Activated CD8-positive, alpha-beta memory T cell treated with anti-CD3 and anti-CD28 coated beads, Interleukin-2, amount 10 ng/mL, durations not matched to agents 7 days and 5 days (primary cell): ENCODE measurements at regions of chr22 and their contacts with region 1.

Region 1: DNA sequence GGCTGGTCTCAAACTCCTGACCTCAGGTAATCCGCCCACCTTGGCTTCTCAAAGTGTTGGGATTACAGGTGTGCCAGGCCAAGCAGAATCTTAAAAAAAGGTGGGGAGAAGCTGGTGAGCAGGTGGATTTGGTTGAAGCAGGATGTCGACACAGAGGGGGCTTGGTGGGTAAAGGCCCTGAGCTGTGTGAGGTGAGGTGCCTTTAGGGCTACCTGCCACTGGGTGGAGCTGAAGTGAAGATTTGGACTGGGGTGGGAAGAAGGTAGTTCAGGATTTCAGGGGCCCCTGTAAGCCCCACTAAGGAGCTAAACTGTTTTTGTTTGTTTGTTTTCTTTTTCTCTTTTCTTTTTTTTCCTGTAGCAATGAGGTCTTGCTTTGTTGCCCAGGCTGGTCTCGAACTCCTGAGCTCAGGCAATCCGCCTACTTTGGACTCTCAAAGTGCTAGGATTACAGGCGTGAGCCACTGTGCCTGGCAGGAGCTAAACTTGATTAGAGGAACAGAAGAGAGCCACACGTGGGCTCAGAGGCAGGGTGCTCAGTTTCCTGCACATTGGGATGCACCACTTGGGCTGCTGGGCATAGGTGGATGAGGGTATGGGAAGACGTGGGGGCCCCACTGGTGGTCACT is 6.0 kb downstream of the P2RX6 start:
- DNase-seq: peak; percentile 58
- ATAC-seq: peak; percentile 51
- H3K4me3 Mint-ChIP-seq: no peak overlapping the region
- H3K27ac Mint-ChIP-seq: no peak overlapping the region
- H3K4me1 Mint-ChIP-seq: peaks cover 15% of the 10 kb centered on the region
- H3K27me3 Mint-ChIP-seq: peaks cover 6% of the 10 kb centered on the region

Region 2: GRCh38 chr22:20441631-20442484 is 579.1 kb before region 1 on chr22:
- CTCF ChIA-PET with region 1: no interaction called
- DNase-seq: no peak
- ATAC-seq: no peak
- H3K4me3 Mint-ChIP-seq: no peak overlapping the region
- H3K27ac Mint-ChIP-seq: no peak overlapping the region
- H3K4me1 Mint-ChIP-seq: peaks cover 4% of the 10 kb centered on the region
- H3K27me3 Mint-ChIP-seq: peaks cover 17% of the 10 kb centered on the region

Region 3: DNA sequence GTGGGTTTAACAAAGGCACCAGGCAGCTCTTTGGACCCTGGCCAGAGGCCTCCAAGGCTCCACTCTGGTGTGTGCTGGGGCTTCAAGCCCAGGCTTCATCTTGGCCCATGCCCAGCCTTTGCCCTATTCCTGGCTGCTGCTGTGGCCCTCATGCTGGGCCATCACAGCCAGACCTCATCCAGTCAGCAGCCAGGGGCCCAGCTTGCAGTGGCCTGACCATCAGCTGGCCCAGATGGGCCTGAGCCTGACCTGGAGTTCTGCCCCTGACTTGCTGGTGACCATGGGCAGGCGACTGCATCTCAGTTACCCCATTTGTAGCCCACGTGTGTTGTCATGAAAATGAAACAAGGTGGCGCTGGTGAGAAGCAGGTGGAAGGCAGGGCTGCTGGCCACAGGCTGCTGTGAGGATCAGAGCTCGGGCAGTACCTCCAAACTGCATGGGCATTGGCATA is 437.4 kb before region 1 on chr22:
- CTCF ChIA-PET with region 1: no interaction called
- DNase-seq: no peak
- ATAC-seq: no peak
- H3K4me3 Mint-ChIP-seq: no peak overlapping the region
- H3K27ac Mint-ChIP-seq: no peak overlapping the region
- H3K4me1 Mint-ChIP-seq: no peaks in the 10 kb centered on the region
- H3K27me3 Mint-ChIP-seq: no peaks in the 10 kb centered on the region

Region 4: GRCh38 chr22:20989323-20990138 is 31.4 kb before region 1 on chr22:
- CTCF ChIA-PET with region 1: no interaction called
- DNase-seq: no peak
- ATAC-seq: no peak
- H3K4me3 Mint-ChIP-seq: no peak overlapping the region
- H3K27ac Mint-ChIP-seq: no peak overlapping the region
- H3K4me1 Mint-ChIP-seq: peaks cover 11% of the 10 kb centered on the region
- H3K27me3 Mint-ChIP-seq: no peaks in the 10 kb centered on the region

Region 5: GRCh38 chr22:21001560-21002325 is 19.2 kb before region 1 on chr22 and contains the start of gene THAP7:
- CTCF ChIA-PET with region 1: interaction called, 22 read pairs
- DNase-seq: peak; percentile 98
- ATAC-seq: peak; percentile 94
- H3K4me3 Mint-ChIP-seq: peak within 1 kb of the TSS; percentile 96
- H3K27ac Mint-ChIP-seq: peak within 1 kb of the TSS; percentile 97
- H3K4me1 Mint-ChIP-seq: peaks cover 28% of the 10 kb centered on the region
- H3K27me3 Mint-ChIP-seq: no peaks in the 10 kb centered on the region
- total RNA-seq, gene THAP7: 25.9 to 28.7 TPM

Region 6: DNA sequence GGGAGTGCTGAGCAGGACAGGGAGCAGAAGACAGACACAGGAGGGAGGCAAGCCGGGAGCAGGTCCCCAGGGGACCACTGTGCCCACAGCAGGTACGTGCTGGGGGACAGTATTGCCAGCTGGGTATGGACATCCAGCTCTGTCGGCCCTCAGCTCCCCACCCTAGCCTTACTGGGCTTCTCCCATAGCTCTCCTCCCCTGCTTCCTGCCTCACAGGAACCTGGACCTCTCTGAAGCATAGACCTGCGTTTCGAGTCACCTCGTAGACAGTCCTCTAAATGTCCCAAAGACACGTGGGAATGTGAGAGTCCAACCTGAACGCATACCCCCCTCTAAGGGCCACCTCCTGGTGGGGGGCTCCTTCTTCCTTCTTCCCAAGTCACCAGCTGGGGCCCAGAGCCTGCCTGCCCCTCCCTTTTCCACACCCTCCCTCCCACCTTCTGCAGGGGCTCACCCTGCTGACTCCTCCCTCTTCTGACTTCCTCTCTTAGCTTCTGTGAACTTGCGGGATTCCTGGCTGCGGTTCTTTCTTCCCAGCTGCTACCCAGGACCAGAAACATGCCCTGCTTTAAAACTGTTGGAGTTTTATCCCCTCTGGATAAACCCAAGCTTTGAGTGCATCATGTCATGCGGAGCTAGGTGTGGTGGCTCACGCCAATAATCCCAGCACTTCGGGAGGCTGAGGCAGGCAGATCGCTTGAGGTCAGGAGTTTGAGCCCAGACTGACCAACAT is 34.8 kb after region 1 on chr22:
- CTCF ChIA-PET with region 1: no interaction called
- DNase-seq: no peak
- ATAC-seq: peak; percentile 27
- H3K4me3 Mint-ChIP-seq: no peak overlapping the region
- H3K27ac Mint-ChIP-seq: no peak overlapping the region
- H3K4me1 Mint-ChIP-seq: peaks cover 10% of the 10 kb centered on the region
- H3K27me3 Mint-ChIP-seq: peaks cover 8% of the 10 kb centered on the region

Region 7: DNA sequence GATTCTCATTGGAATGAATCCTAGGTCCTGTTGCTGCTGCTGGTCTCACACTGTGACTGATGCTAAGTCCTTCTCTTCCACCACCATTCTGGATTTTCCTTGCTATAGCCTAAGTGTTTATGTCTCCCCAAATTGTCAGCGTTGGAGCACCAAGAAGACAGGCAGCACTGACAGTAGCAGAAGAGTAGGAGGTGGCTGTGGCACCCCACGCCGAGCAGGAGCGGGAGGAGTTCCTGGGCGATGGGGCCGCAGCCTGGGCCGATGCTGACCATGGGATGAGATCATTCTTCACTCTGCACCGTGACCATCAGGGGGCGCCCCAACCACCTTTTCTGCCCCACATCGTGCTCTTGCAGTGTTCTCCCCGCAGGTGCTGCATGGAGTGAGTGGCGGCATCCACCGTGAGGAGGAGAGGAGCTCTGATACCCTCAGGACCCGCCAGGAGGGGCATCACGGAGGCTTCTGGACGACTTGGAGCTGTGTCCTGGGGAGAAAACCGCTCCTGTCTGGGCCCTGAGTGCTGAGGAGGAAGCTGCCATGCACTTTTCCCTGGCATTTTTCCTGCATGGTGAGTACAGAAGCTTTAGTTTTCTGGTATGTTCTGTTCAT is 81.8 kb after region 1 on chr22:
- CTCF ChIA-PET with region 1: interaction called, 10 read pairs
- DNase-seq: peak; percentile 82
- ATAC-seq: peak; percentile 98
- H3K4me3 Mint-ChIP-seq: no peak overlapping the region
- H3K27ac Mint-ChIP-seq: no peak overlapping the region
- H3K4me1 Mint-ChIP-seq: peaks cover 5% of the 10 kb centered on the region
- H3K27me3 Mint-ChIP-seq: peaks cover 38% of the 10 kb centered on the region